Mammary epithelial cell (primary cell): ENCODE measurements at regions of chr19 and their contacts with region 1.

Region 1: GRCh38 chr19:12777217-12778016 is 2.1 kb upstream of the HOOK2 start:
- DNase-seq: peak; percentile 63
- H3K4me3 ChIP-seq: peak overlapping the region; percentile 56 to 73 (median 61)
- H3K27ac ChIP-seq: peak overlapping the region; percentile 77
- H3K4me1 ChIP-seq: peaks cover 47% of the 10 kb centered on the region
- H3K27me3 ChIP-seq: no peaks in the 10 kb centered on the region
- CTCF ChIP-seq: peak; percentile 70 to 96

Region 2: DNA sequence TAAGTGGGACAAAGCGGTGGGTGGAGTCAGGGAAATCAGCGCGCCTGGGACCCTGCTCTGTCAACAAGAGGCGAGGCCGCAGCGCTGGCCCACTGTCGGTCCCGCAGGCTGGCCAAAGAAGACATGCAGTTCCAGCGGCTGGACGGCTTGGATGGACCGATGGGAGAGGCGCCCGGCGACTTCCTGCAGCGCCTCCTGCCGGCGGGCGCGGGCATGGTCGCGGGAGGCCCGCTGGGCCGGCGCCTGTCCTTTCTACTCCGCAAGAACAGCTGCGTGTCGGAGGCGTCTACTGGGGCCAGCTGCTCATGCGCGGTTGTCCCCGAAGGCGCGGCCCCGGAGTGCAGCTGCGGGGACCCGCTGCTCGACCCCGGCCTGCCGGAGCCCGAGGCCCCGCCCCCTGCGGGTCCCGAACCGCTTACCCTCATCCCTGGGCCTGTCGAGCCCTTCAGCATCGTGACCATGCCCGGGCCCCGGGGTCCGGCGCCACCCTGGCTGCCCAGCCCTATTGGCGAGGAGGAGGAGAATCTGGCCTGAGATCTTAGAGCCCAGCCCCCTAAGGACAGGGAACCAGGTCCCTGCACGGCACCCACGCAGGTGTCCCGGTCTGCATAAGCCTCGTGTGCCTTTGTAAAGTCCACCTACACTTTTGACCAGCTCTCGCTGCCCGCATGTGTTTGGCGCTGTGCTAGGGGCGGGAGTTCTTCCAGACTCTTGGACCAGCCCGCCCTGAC is 19.7 kb before region 1 on chr19:
- CTCF ChIA-PET with region 1: no interaction called
- dilution Hi-C with region 1: no loop called
- in situ Hi-C with region 1: no loop called
- intact Hi-C with region 1: loop called (anchors 2 kb)
- DNase-seq: peak; percentile 55
- H3K4me3 ChIP-seq: peak overlapping the region in 2 of 3 experiments; percentile 32 to 38
- H3K27ac ChIP-seq: no peak overlapping the region
- H3K4me1 ChIP-seq: peaks cover 7% of the 10 kb centered on the region
- H3K27me3 ChIP-seq: no peaks in the 10 kb centered on the region
- CTCF ChIP-seq: peak; percentile 82 to 92

Region 3: DNA sequence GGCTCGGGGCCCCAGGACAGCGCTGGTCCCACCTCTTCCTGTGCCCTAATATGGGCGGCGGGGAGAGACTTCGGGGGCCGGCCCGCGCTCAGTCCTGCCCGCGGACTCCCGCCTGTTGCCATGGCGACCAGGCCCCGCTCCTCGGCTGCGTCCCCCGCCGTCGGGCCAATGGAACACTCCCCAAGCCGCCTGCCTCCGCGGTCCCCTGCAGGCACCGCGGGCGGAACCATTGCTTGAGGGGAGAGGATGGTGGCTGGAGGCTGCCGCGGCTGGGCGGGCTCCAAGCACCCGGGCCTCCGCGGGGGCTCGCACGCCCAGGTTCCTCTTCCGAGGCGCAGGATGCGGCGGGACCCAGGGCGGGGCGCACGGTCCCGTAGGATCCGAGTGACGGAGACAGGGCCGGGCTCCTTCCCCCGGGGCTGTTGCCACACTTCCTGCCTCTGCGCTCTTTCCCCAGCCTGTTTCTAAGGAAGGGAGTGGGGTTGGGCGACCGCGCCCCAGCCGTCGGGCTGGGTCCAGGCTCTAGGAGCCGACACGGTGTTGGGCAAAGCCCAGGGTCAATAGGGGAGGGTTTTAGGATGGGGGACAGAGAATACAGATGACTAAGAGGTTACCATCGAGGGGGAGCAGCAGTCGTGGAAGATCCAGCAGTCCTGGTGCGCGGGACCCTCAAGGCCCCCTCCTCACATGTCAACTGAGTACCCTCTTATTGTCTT is 12.6 kb after region 1 on chr19:
- CTCF ChIA-PET with region 1: interaction called, 22 read pairs
- dilution Hi-C with region 1: no loop called
- in situ Hi-C with region 1: no loop called
- intact Hi-C with region 1: loop called (anchors 1 kb)
- DNase-seq: peak; percentile 95
- H3K4me3 ChIP-seq: peak overlapping the region; percentile 38 to 96 (median 43)
- H3K27ac ChIP-seq: peak overlapping the region; percentile 90
- H3K4me1 ChIP-seq: peaks cover 55% of the 10 kb centered on the region
- H3K27me3 ChIP-seq: no peaks in the 10 kb centered on the region
- CTCF ChIP-seq: no peak